ENCODE measurements at regions of chr14 and their contacts with region 1.

Region 1: GRCh38 chr14:21557084-21557901 is 22.6 kb downstream of the OR10G3 start:
- DNase-seq: no peak
- ATAC-seq: peak; percentile 49
- H3K4me3 Mint-ChIP-seq: peak overlapping the region; percentile 50
- H3K27ac Mint-ChIP-seq: peak overlapping the region; percentile 33
- H3K4me1 Mint-ChIP-seq: peaks cover 3% of the 10 kb centered on the region
- H3K27me3 Mint-ChIP-seq: no peaks in the 10 kb centered on the region
- CTCF ChIP-seq: no peak

Region 2: GRCh38 chr14:21014761-21015190 is 542.5 kb before region 1 on chr14:
- CTCF ChIA-PET with region 1: interaction called, 4 read pairs
- POLR2A ChIA-PET with region 1: no interaction called
- intact Hi-C with region 1: loop called (anchors 1 kb)
- DNase-seq: peak; percentile 52
- ATAC-seq: peak; percentile 64
- H3K4me3 Mint-ChIP-seq: no peak overlapping the region
- H3K27ac Mint-ChIP-seq: no peak overlapping the region
- H3K4me1 Mint-ChIP-seq: no peaks in the 10 kb centered on the region
- H3K27me3 Mint-ChIP-seq: peaks cover 37% of the 10 kb centered on the region
- CTCF ChIP-seq: peak; percentile 48

Region 3: DNA sequence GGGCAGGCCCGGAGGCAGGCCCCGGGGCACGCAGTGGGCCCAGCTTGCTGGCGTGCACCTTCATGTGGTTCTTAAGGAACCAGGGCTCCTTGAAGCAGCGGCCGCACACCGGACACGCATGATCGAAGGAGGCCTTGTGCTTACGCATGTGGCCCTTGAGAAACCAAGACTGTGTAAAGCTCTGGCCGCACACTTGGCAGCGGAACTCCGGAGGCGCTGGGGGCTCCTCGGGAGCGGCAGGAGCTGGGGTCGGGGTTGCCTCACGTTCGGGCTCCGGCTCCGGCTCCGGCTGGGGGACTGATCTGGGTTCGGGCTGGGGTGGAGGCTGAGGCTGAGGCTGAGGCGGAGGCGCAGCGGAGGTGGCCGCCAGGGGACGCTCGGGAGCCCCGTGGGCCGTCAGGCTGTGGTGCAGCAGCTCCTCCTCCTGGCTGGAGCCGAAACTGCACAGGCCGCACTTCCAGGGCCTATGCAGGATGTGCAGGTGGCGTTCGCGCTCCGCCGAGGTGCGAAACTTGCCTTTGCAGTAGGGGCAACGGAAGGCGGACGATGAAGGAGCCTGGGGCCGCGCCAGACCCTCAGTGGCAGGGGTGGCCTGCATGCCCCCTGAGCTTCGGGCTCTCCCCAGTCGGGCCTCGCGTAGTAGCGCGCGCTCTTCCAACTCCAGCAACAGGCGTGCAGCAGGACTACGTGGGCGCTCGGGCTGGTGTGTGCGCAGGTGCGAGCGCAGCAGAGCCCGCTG is 464.9 kb before region 1 on chr14:
- CTCF ChIA-PET with region 1: no interaction called
- POLR2A ChIA-PET with region 1: no interaction called
- intact Hi-C with region 1: loop called (anchors 2 kb)
- DNase-seq: peak; percentile 94
- ATAC-seq: peak; percentile 99
- H3K4me3 Mint-ChIP-seq: no peak overlapping the region
- H3K27ac Mint-ChIP-seq: no peak overlapping the region
- H3K4me1 Mint-ChIP-seq: peaks cover 18% of the 10 kb centered on the region
- H3K27me3 Mint-ChIP-seq: no peaks in the 10 kb centered on the region
- CTCF ChIP-seq: peak; percentile 98

Region 4: DNA sequence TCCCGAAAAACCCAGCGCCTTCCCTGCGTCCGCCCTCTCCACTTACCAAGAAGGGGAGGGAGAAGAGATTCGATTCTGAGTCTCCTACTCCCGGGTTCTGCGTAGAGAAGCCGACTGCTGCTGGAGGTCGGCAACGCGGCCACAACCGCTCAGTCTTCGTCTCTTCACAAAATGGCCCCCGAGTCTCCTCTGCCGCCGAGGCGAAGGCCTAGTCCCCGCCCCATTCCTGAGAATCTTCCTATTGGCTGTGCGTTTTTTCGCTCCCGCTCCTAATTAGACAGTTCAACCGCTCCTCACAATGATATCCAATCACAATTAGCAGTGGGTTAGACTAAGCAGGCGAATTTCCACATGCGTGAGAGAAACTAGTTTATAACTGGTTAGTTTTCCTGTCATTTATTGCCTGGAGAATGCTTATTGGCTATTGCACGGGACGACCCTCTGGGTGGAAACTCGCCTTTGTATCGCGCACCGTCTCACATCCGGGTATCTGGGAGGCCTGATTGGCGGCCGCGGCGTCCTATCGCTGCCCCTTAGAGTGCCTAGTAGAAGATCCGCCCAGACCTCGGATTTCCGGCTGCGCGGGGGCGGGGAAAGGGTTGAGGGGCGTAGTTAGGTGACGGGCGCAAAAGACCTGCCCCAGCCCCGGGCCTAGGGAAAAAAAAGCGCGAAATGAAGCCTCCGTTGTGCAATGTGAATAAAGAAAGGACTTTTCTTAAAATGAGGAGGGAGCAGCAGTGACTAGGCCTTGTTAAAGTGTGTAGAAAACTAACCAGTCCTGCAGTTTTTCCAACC is 287.8 kb before region 1 on chr14 and contains the start of gene HNRNPC:
- CTCF ChIA-PET with region 1: no interaction called
- POLR2A ChIA-PET with region 1: no interaction called
- intact Hi-C with region 1: loop called (anchors 10 kb)
- DNase-seq: peak; percentile 100
- ATAC-seq: peak; percentile 87
- H3K4me3 Mint-ChIP-seq: peak within 1 kb of the TSS; percentile 100
- H3K27ac Mint-ChIP-seq: peak within 1 kb of the TSS; percentile 100
- H3K4me1 Mint-ChIP-seq: peaks cover 48% of the 10 kb centered on the region
- H3K27me3 Mint-ChIP-seq: no peaks in the 10 kb centered on the region
- CTCF ChIP-seq: no peak
- total RNA-seq, gene HNRNPC: 653 and 683 TPM in 2 replicates

Region 5: DNA sequence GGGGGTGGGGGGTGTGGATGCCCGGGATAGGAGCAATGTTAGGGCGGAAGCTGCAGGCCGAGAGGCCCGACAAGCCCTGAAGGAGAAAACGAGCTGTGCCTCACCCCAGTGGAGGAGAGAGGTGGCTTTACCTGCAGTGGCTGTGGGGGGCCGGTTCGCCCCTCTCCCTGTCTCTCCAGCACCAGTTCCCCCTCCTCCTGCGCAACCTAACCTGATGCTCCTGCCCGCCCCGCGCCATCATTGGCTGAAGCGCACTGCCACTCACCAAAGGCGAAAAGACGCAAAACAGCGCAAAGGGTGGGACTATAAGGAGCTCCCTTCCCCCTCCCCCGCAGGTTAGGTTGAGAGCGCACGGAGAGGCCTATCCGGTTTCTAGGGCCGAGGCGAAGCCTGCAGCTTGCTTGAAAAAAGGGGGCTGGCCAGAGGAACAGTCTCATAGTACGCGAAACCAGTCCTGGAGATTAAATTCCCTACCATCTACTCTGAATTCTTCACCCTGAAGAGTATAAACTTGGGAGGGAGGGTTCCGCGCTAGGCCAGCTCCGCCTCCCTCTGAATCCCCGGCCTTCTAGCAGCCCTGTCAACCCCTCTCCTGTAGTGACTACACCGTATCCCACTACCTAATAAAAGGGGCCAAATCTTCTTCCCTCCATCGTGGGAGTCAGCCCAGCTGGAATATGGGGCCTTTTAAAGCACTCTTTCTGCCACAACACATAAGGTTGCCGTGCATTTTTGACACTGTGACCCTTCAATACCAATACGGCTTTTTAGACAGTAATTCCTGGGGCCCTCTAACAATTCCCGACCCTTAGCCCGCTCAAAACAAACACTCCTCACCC is 120.0 kb before region 1 on chr14:
- CTCF ChIA-PET with region 1: no interaction called
- POLR2A ChIA-PET with region 1: no interaction called
- intact Hi-C with region 1: loop called (anchors 1 kb)
- DNase-seq: peak; percentile 96
- ATAC-seq: peak; percentile 99
- H3K4me3 Mint-ChIP-seq: peak overlapping the region; percentile 84
- H3K27ac Mint-ChIP-seq: peak overlapping the region; percentile 87
- H3K4me1 Mint-ChIP-seq: peaks cover 56% of the 10 kb centered on the region
- H3K27me3 Mint-ChIP-seq: no peaks in the 10 kb centered on the region
- CTCF ChIP-seq: no peak

Region 6: GRCh38 chr14:21476925-21477681 is 80.2 kb before region 1 on chr14 and contains the starts of genes RAB2B and TOX4:
- CTCF ChIA-PET with region 1: no interaction called
- POLR2A ChIA-PET with region 1: no interaction called
- intact Hi-C with region 1: loop called (anchors 1 kb)
- DNase-seq: peak; percentile 84
- ATAC-seq: peak; percentile 96
- H3K4me3 Mint-ChIP-seq: peak within 1 kb of the TSS; percentile 99
- H3K27ac Mint-ChIP-seq: peak within 1 kb of the TSS; percentile 95
- H3K4me1 Mint-ChIP-seq: peaks cover 37% of the 10 kb centered on the region
- H3K27me3 Mint-ChIP-seq: no peaks in the 10 kb centered on the region
- CTCF ChIP-seq: no peak
- total RNA-seq, gene RAB2B: 25.0 and 27.5 TPM in 2 replicates
- total RNA-seq, gene TOX4: 77.2 and 81.4 TPM in 2 replicates

Region 7: DNA sequence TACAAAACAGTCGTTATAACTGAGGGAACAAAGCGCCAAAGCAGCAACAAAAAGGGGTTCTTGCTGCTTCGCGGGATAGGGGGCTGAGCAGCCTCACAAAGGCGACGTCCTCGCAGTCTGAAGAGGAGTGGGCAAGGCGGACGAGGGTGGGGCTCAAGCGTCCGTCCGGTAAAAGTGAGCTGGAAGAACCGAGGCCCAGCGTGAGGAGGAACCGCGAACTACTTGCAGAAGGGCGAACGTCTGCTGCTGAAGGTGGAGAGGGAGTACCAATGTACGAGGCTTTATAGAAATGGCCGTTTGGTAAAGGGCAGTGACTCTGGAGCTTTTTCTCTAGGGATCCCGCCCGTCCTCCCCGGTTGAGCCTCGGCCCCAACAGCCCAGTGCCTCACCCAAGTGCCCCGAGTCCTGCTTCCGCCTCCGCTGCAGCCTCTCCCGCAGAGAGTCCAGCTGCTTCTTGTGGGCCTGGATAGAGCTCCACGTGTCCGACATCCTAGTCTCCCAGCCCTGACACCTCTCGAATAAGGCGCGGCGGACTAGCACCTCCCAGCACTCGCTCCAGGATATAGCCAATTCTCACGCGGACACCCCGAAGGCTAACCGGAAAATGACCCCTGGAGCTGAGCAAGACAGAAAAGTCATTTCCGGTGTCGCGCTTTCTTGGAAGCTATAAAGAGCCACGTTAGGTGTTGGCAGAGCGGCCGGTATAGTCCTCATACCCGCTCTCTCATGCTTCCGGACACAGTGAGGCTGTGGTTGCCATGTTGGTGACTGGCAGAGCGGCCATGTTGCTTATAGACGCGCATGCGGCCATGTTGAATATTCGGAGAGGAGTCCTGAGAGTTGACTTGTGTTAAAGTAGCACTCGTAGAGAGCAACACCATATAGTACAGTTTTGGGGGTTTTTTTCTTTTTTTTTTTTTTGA is 46.3 kb before region 1 on chr14 and contains the start of gene METTL3:
- CTCF ChIA-PET with region 1: interaction called, 7 read pairs
- POLR2A ChIA-PET with region 1: no interaction called
- intact Hi-C with region 1: loop called (anchors 5 kb)
- DNase-seq: peak; percentile 80
- ATAC-seq: peak; percentile 99
- H3K4me3 Mint-ChIP-seq: peak within 1 kb of the TSS; percentile 99
- H3K27ac Mint-ChIP-seq: peak within 1 kb of the TSS; percentile 96
- H3K4me1 Mint-ChIP-seq: peaks cover 29% of the 10 kb centered on the region
- H3K27me3 Mint-ChIP-seq: peaks cover 3% of the 10 kb centered on the region
- CTCF ChIP-seq: no peak
- total RNA-seq, gene METTL3: 81.9 and 94.5 TPM in 2 replicates

Measured in activated B cell treated with CpG ODN at 0.5 μM for 24 hours (primary cell).